ENCODE measurements at regions of chr14 and their contacts with region 1.

Region 1: DNA sequence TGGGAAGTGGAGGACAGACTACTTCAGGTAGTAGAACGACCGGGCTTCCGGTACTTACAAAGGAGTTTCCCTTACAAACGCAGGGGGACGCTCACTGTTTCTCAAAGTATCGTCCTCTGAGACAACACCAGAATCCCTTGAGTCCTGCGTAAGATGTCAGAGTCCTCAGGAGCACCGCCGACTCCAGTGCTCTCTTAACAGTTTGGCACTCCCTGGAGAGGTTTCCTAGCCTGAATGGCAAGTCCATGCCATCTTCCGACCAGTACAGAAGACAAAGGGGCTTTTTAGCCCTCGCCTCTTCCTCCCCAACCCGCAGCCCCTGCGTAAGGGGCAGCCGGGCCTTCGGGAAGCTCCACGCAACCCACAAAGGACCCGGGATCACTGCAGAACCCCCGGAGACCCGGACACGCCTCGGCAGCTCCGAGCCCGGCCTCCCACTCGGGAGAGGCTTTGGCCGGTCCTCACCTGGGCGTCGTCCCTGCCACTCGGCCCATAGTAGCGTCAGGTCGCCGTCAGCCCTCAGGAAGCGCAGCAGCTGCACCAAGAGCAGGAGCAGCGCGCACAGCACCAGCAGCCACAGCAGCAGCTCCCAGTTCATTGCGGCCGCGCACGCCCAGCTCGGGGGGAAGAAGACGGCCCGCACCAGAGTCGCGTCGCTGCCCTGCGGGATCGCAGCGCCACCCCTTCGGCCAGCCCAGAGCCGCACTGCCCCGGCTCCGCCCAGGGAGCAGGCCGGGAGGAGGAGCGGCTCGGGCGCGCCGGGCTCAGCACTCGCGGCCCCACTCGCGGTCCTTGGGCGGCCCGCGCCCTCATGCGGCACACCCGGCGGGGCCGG is at the start of gene DHRS7:
- DNase-seq: peak; percentile 94
- H3K4me3 ChIP-seq: peak within 1 kb of the TSS; percentile 79 to 94
- H3K27ac ChIP-seq: peak within 1 kb of the TSS; percentile 78 to 96
- H3K4me1 ChIP-seq: peaks cover 6 to 11% of the 10 kb centered on the region in 2 experiments; a peak in 3 of 4 replicates
- H3K27me3 ChIP-seq: no peaks in the 10 kb centered on the region
- CTCF ChIP-seq: peak; percentile 28; the same call in 1 of the 2 replicates
- EP300 ChIP-seq: no peak
- RAD21 ChIP-seq: peak; percentile 31
- polyA plus RNA-seq, gene DHRS7: 54.0 and 88.7 TPM in 2 replicates

Region 2: DNA sequence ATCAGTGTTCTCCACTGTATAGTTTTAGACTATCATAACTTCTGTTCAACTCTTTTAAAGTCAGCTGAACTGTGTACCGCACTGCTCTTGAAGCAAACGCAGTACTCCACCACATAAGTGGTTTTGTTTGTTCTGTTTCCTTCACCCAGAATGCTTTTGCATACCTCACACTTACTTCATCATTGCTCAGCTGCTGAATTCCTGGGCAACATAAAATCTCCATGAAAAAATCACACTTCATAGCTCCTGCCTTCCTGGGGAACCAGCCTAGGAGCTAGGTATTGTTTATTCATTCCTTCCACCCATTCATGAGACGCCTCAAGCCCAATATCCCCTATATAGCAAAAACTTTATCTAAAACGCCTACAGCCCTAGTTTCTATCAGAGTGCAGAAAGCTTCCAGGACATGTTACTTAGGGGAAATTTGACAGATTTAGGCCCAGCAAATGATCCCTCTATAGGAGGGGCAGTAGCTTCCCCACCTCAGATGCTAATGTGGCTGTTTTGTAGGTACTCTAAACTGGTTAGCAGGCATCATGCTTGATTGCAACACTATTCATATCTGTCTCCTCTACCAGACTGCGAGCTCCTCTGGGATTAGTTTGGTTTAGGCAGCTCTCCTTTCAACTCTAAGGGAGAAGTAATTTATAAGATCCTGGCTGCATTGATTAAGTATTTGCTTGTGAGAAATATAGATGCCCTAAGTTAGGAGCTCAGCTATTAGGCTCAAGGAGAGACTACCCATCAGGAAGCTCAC is 200.5 kb before region 1 on chr14:
- CTCF ChIA-PET with region 1: interaction called, 14 read pairs
- POLR2A ChIA-PET with region 1: no interaction called
- DNase-seq: no peak
- H3K4me3 ChIP-seq: peak overlapping the region; percentile 53 to 57; a peak in 2 of 4 replicates
- H3K27ac ChIP-seq: no peak overlapping the region
- H3K4me1 ChIP-seq: no peaks in the 10 kb centered on the region
- H3K27me3 ChIP-seq: no peaks in the 10 kb centered on the region
- CTCF ChIP-seq: no peak
- EP300 ChIP-seq: no peak
- RAD21 ChIP-seq: no peak

Region 3: GRCh38 chr14:60091550-60092530 is 73.1 kb before region 1 on chr14 and contains the start of gene PCNX4:
- CTCF ChIA-PET with region 1: no interaction called
- POLR2A ChIA-PET with region 1: interaction called, 16 read pairs
- DNase-seq: peak; percentile 90
- H3K4me3 ChIP-seq: peak within 1 kb of the TSS; percentile 68 to 94
- H3K27ac ChIP-seq: peak within 1 kb of the TSS; percentile 99
- H3K4me1 ChIP-seq: peaks cover 4 to 26% of the 10 kb centered on the region in 2 experiments; a peak in 3 of 4 replicates
- H3K27me3 ChIP-seq: no peaks in the 10 kb centered on the region
- CTCF ChIP-seq: no peak
- EP300 ChIP-seq: peak in 1 of 2 experiments; percentile 37; a peak in 1 of 4 replicates
- RAD21 ChIP-seq: no peak
- polyA plus RNA-seq, gene PCNX4: 21.1 and 26.3 TPM in 2 replicates

Region 4: DNA sequence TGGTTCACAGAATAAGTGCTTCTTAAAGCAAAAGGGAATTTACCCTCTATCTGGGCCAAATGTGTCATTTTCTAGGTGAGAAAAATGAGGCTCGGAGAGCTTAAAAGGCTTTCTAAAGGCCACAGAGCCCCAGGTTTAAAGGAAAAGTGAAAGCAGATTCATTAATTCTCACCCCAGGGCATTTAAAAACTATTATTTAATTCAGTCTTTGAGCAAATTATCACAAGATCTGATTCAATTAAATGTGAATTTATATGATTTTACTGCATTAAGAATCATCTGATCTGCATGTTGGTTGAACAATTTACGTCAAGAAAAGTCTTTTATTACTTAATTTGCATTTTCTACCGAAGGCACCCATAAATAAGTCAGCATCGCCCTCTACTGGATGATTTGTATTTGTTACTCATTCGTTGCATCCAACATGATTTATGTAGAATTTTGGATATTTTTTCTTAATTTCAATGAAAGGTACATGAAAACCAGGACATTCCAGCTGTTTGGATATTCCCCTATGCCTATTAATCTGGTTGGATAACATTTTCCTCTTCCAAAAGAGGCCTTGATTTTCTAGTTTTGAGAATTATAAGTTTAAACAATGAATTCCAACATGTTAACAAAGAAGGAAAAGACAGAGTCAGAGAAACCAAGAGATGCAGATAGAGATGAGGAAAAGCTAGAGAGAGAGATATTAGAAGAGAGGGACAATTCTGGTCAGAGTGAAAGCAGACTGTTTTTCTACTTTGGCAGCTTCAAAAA is 19.4 kb after region 1 on chr14:
- CTCF ChIA-PET with region 1: interaction called, 50 read pairs
- POLR2A ChIA-PET with region 1: interaction called, 3 read pairs
- DNase-seq: no peak
- H3K4me3 ChIP-seq: peak overlapping the region; percentile 40 to 61
- H3K27ac ChIP-seq: peak overlapping the region in 1 of 2 experiments; percentile 68; a peak in 2 of 4 replicates
- H3K4me1 ChIP-seq: peaks cover 6 to 8% of the 10 kb centered on the region in 2 experiments; a peak in 2 of 4 replicates
- H3K27me3 ChIP-seq: no peaks in the 10 kb centered on the region
- CTCF ChIP-seq: peak; percentile 90
- EP300 ChIP-seq: no peak
- RAD21 ChIP-seq: peak; percentile 93

Region 5: DNA sequence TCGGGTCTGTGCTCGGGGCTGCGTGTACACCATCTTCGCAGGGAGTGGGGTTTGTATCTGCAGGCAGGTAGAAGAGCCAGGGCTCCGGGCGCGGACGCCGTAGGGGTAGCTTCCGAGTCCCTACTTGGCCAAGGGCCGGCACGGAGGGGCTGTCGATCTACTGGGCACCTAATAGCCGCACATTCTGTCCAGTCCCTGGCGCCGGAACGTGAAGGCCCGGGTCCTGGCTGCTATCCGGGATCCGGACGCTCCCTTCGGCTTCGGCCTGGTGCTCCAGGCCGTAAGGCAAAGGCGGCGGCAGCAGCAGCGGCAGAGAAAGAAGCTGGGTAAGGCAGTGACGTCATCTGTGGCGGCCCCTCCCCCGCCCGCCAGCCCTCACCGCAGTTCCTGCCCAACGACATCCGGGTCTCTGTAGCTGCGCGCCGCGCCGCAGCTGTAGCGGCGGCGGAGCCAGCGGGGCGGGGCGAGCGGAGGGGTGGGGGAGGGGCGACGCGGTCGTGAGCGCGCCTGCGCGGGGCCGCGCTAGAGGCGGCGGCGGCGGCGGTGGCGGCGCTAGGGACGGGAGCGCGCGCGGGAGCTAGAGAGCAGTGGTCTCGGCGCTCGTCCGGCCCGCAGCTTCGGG is 83.9 kb after region 1 on chr14 and contains the start of gene PPM1A:
- CTCF ChIA-PET with region 1: no interaction called
- POLR2A ChIA-PET with region 1: interaction called, 10 read pairs
- DNase-seq: peak; percentile 96
- H3K4me3 ChIP-seq: peak within 1 kb of the TSS; percentile 78 to 82
- H3K27ac ChIP-seq: peak within 1 kb of the TSS; percentile 94 to 98
- H3K4me1 ChIP-seq: peaks cover 0 to 29% of the 10 kb centered on the region in 2 experiments; a peak in 3 of 4 replicates
- H3K27me3 ChIP-seq: no peaks in the 10 kb centered on the region
- CTCF ChIP-seq: no peak
- EP300 ChIP-seq: peak in 1 of 2 experiments; percentile 30; a peak in 1 of 4 replicates
- RAD21 ChIP-seq: no peak
- polyA plus RNA-seq, gene PPM1A: 11.6 and 12.3 TPM in 2 replicates

Measured in SK-N-SH (cell line).